ENCODE measurements at regions of chrX and their contacts with region 1.

Region 1: GRCh38 chrX:129606918-129607317 is 47.8 kb downstream of the APLN start:
- DNase-seq: peak; percentile 58
- ATAC-seq: peak; percentile 54
- H3K4me3 Mint-ChIP-seq: no peak overlapping the region
- H3K27ac Mint-ChIP-seq: no peak overlapping the region
- H3K4me1 Mint-ChIP-seq: peaks cover 19% of the 10 kb centered on the region
- H3K27me3 Mint-ChIP-seq: no peaks in the 10 kb centered on the region
- CTCF ChIP-seq: peak; percentile 41

Region 2: DNA sequence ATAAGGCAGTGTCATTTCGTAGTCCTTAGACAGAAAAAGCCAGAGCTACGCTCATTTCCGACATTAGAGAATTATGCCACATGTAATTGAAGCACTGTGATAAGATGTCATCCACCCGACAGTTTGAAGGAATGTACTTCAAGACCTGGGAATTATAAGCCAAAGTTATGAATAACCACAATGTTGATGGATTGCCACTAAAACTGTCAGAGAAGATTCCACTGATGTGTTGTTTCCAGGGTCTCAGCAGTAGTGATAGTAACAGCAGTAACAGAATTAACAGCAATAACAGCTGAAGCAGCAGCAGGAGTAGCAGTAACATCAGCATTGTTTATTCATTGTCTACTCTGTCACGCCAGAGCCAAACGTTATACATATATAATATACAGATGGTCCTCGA is 589.5 kb after region 1 on chrX:
- CTCF ChIA-PET with region 1: no interaction called
- POLR2A ChIA-PET with region 1: no interaction called
- intact Hi-C with region 1: loop called (anchors 10 kb)
- DNase-seq: no peak
- ATAC-seq: no peak
- H3K4me3 Mint-ChIP-seq: no peak overlapping the region
- H3K27ac Mint-ChIP-seq: no peak overlapping the region
- H3K4me1 Mint-ChIP-seq: no peaks in the 10 kb centered on the region
- H3K27me3 Mint-ChIP-seq: no peaks in the 10 kb centered on the region
- CTCF ChIP-seq: no peak